ENCODE measurements at regions of chr9 and their contacts with region 1.

Region 1: DNA sequence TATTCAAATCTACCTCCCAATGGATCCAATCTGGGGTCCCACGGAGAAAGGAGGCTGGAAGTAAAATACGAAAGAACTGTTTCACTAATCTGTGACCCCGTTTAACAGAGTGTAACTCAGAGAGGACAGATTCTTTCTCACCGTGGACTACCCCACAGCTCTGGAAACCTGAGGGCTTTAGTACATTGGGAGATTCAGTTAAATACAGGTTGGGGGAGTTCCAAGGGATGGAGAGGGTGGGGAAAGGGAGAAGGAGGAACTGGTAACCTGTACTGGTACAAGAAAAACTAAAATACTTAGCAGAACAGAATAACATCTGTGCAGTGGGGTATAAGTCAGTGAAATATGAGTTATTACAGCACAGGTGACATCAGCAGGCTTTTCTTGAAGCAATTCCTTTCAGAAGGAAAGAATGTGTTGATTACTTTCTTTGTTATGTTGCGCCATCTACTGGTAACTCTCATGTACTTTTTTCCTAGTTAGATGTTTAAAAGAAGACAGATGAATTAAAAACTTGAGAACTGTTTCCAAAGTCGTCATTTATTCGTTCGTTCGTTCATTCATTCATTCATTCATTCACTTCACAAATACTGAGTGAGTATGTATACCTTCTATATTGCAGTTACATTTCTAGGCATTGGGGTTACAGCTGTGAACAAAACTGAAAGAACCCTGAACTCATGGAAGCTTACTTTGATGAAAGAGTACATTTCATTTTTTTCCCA is 30.0 kb upstream of the STOM start:
- DNase-seq: peak; percentile 53
- ATAC-seq: peak; percentile 72
- H3K4me3 ChIP-seq: no peak overlapping the region
- H3K27ac ChIP-seq: peak overlapping the region; percentile 35; the same call in 1 of the 2 replicates
- H3K4me1 ChIP-seq: no peaks in the 10 kb centered on the region
- H3K27me3 ChIP-seq: no peaks in the 10 kb centered on the region
- CTCF ChIP-seq: peak; percentile 44

Region 2: DNA sequence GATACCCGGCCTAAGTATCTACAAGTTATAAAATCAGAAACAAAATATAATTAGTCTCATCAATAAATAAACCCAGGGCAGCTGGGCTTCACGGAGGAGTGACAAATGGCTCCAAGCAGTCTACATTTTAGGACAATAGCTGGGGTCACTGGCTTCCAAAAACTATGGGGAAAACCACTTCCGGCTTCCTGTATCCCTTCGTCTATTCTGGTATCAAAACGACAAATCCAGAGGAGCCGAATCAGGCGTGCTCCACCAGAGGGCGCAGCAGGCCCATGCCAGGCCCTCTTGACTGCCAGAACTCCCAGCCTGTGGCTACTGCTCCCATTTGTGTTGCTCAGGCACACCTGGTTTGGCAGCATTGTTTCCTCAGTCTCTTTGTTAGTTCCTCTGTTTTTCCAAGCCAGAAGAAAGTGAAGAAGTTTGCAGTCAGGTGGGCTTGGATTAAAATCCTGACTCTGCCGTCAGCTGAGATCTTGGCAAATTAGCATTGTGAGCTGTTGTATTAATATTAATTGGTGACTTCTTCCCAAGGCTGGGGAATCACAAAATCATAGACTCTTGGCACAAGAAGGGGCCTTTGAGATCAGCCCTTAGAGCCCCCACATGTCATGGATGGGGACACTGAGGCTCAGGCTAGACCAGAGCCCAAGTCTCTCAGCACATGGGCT is 186.8 kb before region 1 on chr9:
- CTCF ChIA-PET with region 1: interaction called, 4 read pairs
- POLR2A ChIA-PET with region 1: no interaction called
- in situ Hi-C with region 1: no loop called
- intact Hi-C with region 1: loop called (anchors 2 kb)
- DNase-seq: peak; percentile 64
- ATAC-seq: peak; percentile 99
- H3K4me3 ChIP-seq: no peak overlapping the region
- H3K27ac ChIP-seq: peak overlapping the region; percentile 74
- H3K4me1 ChIP-seq: no peaks in the 10 kb centered on the region; the same call in 1 of the 2 replicates
- H3K27me3 ChIP-seq: no peaks in the 10 kb centered on the region
- CTCF ChIP-seq: peak; percentile 93

Region 3: DNA sequence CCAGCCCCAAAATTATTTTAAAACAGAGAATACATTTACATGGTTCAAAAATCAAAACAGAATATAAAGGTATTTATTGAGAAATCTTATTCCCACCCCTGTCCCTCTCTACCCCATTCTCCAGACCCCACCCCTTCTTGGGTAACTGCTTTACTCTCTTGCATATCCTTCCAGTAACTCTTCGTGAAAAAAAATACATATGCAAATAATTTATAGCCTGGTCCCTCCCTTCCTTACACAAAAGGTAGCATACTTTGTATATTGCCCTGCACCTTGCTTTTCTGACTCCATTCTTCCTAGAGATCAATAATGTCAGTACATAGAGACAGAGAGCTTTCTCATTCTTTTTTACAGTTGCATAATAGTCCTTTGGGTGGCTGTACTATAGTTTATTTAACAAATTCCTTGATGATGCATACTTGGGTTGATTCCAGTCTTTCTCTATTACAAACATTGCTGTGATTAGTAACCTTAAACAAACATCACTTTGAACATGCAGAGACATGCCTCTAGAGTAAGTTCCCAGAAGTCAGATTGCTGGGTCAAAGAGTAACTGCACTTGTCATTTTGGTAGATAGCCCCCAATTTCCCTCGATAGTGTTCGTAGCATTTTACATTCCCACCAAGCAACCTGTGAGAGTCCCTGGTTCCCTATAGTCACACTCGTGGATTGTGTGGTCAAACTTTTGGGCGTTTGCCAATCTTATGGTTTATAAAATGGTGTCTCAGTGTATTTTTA is 77.8 kb before region 1 on chr9:
- CTCF ChIA-PET with region 1: interaction called, 5 read pairs
- POLR2A ChIA-PET with region 1: no interaction called
- in situ Hi-C with region 1: no loop called
- intact Hi-C with region 1: loop called (anchors 1 kb)
- DNase-seq: peak; percentile 89
- ATAC-seq: peak; percentile 75
- H3K4me3 ChIP-seq: no peak overlapping the region
- H3K27ac ChIP-seq: peak overlapping the region; percentile 48; the same call in 1 of the 2 replicates
- H3K4me1 ChIP-seq: peaks cover 6% of the 10 kb centered on the region; the same call in 1 of the 2 replicates
- H3K27me3 ChIP-seq: no peaks in the 10 kb centered on the region
- CTCF ChIP-seq: no peak

Region 4: GRCh38 chr9:121621113-121621449 is 221.0 kb after region 1 on chr9:
- CTCF ChIA-PET with region 1: no interaction called
- POLR2A ChIA-PET with region 1: no interaction called
- in situ Hi-C with region 1: no loop called
- intact Hi-C with region 1: no loop called
- DNase-seq: no peak
- ATAC-seq: peak; percentile 62; the same call in 1 of the 2 replicates
- H3K4me3 ChIP-seq: no peak overlapping the region
- H3K27ac ChIP-seq: no peak overlapping the region
- H3K4me1 ChIP-seq: no peaks in the 10 kb centered on the region
- H3K27me3 ChIP-seq: no peaks in the 10 kb centered on the region
- CTCF ChIP-seq: no peak; the same call in 1 of the 2 replicates

Measured in Panc1 (cell line).